Heart left ventricle (tissue), 16 donors: ENCODE measurements at regions of chr4 and their contacts with region 1.

Region 1: GRCh38 chr4:87390891-87391575 is at the start of gene HSD17B11:
- DNase-seq: peak; percentile 89 to 92 (median 91)
- ATAC-seq: peak; percentile 98 to 100 (median 100)
- H3K4me3 ChIP-seq: peak within 1 kb of the TSS; percentile 55 to 82 (median 70)
- H3K27ac ChIP-seq: peak within 1 kb of the TSS; percentile 73 to 94 (median 88)
- H3K4me1 ChIP-seq: peaks cover 0 to 43% (median 11%) of the 10 kb centered on the region in 12 donors
- H3K27me3 ChIP-seq: no peaks in the 10 kb centered on the region
- CTCF ChIP-seq: peak in 5 of 12 donors; percentile 10 to 41 (median 36)
- POLR2A ChIP-seq: peak in 1 of 2 donors; percentile 89
- total RNA-seq, gene HSD17B11: 6.6 to 28.0 (median 13.4) TPM

Region 2: DNA sequence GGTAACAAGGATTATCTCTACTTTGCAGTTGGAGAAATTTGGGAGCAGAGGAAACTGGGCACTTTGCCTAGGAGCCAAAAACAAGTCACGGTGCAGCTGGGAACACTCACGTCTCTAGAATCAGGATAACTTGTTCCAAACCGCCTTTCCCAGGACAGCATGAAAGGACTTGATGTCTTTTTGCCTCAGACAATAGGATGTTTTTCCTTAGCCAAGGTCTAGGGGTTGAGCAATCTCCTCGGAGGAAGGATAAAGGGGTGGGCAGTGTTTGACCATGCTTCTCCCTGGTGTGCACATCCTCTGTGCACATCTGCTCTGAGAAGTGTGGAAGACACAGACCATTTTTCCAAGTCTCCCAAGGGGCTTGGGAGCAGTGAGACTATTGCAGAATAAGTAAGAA is 139.8 kb after region 1 on chr4:
- intact Hi-C with region 1: loop called in 1 of 10 experiments (anchors 10 kb)
- DNase-seq: peak; percentile 64 to 86 (median 78)
- ATAC-seq: peak; percentile 90 to 96 (median 92)
- H3K4me3 ChIP-seq: peak overlapping the region in 9 of 12 donors; percentile 49 to 64 (median 61)
- H3K27ac ChIP-seq: peak overlapping the region; percentile 74 to 93 (median 84)
- H3K4me1 ChIP-seq: peaks cover 0 to 37% (median 24%) of the 10 kb centered on the region in 12 donors
- H3K27me3 ChIP-seq: no peaks in the 10 kb centered on the region
- CTCF ChIP-seq: no peak
- POLR2A ChIP-seq: peak in 1 of 2 donors; percentile 56